ENCODE measurements at regions of chr6 and their contacts with region 1.

Region 1: DNA sequence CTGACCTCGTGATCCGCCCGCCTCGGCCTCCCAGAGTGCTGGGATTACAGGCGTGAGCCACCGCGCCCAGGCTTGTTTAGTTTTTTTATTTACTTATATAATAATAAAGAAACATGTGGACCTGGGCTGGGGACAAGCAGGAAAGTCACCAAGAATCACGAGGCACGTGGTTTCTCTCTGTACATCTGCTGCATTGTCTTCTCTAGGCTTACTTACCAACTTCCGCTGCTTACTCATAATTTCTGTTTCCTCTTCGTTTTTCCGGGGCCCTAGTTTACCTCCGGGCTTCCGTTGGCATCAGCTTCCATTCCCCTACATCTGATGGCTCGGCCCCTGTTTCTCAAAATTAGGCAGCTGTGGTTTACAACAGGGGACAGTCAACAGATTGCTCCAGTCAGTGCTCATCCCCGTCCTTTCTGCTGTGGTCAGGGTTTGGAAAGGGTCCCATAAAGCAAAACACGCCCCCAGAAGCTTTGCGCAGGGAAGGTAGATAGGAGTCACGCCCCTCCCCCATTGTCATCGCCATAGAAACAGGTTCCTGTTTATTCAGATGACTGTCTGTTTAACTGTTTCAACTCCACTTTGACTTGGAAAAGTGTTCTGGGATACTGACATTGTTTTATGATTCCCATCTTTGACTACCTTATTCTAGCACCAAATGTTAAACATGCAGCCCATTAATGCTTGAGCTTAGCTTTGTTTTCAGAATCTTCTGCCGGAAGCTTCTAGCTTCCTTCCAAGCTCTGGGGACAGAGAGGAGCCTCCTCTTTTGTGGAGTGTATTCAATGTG is 31.9 kb upstream of the TXLNB start:
- DNase-seq: peak; percentile 84
- ATAC-seq: peak; percentile 84
- H3K4me3 ChIP-seq: peak overlapping the region; percentile 64
- H3K27ac ChIP-seq: peak overlapping the region; percentile 97
- H3K4me1 ChIP-seq: peaks cover 9% of the 10 kb centered on the region; the same call in 1 of the 2 replicates
- H3K27me3 ChIP-seq: no peaks in the 10 kb centered on the region
- CTCF ChIP-seq: no peak

Region 2: DNA sequence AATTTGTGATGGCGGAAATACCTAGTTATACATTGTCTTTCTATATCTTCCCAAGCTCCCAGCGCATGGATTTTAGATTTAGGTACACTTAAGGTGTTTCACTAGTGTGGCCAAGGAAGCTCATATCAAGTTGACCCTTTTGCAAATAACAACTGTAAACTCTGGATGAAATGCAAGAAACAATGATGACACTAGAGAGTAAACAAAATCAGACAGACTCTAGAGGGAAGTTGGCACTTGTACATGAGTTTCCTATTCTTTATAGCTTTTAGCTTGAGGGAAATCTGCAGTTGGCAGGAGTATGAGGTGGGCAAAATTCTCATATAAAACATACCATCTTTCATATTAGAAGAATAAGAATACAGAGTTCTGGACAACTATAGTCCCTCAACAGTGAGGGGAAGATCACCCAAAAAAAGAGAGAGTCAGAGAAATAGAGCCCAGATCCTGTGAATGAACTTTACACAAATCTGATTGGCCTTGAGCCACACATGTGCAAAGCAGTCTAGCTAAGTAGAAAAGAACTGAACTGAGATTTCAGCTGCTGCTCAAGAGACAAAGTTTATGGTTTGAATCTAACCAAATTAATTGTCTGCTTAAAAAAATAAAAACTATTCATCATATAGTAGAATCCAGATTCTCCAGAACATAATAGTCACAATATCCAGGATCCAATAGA is 58.1 kb before region 1 on chr6:
- CTCF ChIA-PET with region 1: no interaction called
- POLR2A ChIA-PET with region 1: no interaction called
- intact Hi-C with region 1: loop called (anchors 2 kb)
- DNase-seq: peak; percentile 32
- ATAC-seq: peak; percentile 21
- H3K4me3 ChIP-seq: peak overlapping the region; percentile 45; the same call in 1 of the 2 replicates
- H3K27ac ChIP-seq: peak overlapping the region; percentile 95
- H3K4me1 ChIP-seq: peaks cover 42% of the 10 kb centered on the region
- H3K27me3 ChIP-seq: no peaks in the 10 kb centered on the region
- CTCF ChIP-seq: no peak

Measured in PC-3 (cell line).